Endothelial cell of umbilical vein (primary cell): ENCODE measurements at regions of chr1 and their contacts with region 1.

Region 1: DNA sequence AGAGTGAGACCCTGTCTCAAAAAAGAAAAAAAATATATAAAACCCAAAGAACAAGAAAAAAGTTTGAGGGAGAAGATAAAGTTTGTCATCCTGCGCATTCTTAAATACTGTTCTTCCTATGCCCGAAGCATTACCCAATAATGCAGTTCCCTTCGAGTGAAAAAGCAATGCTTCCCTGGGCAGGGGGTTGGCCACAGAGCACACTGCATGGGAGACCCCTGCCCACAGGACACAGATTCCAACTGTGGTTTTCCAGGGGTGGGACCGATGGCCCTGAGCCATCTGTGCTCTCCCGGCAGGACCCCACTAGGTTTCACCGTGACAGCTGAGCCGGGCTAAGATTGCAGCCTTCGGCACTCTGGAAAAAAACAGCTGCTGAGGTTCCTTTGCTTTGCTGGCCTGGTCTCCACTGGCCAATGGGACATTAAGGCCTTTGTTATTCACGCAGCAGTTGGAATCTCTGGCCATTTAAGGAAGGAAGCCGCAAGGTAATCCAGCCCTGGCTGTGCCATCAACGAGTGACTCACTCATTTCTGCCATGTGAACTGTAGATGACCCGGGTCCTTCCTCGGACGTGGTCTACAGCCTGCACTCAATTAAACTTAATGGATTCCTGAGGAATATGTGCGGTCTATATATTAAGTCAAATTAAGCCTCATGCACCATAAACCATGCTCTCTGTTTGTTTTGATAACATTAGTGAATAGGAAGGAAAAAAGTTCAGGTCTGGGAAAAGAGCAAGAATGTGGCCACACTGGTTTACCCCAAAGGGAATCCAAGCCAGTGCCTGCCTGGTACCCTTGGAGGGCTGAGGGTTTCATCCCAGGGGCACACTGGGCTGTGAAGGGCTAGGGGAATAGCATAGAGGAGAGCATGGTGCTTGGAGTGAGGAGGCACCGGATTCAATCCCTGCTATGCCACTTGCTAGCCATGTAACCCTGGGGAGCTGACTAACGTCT is 163.2 kb downstream of the ZBTB18 start:
- DNase-seq: peak; percentile 98
- H3K4me3 ChIP-seq: no peak overlapping the region
- H3K27ac ChIP-seq: peak overlapping the region; percentile 84
- H3K4me1 ChIP-seq: peaks cover 16% of the 10 kb centered on the region
- H3K27me3 ChIP-seq: no peaks in the 10 kb centered on the region
- CTCF ChIP-seq: no peak
- POLR2A ChIP-seq: peak; percentile 27

Region 2: DNA sequence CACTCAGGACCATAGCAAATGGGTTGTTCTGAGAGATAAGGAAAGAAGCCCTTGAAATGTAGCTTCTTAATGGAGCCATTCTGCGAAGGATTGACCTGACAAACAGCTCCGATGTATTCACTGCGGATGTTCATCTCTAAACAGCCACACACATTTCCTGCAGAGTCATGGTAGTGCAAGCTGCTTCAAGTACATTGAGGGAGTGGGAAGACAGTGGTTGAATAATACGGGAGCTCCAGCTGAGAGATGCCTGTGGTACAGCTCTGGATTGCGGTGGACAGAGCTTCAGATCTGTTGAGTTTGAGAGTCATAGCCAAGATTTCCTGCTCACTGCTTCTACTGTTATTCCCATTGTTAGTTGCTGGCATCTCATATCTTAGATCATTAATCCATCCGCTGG is 76.6 kb before region 1 on chr1:
- CTCF ChIA-PET with region 1: no interaction called
- POLR2A ChIA-PET with region 1: no interaction called
- dilution Hi-C with region 1: no loop called
- intact Hi-C with region 1: loop called (anchors 1 kb)
- DNase-seq: no peak
- H3K4me3 ChIP-seq: no peak overlapping the region
- H3K27ac ChIP-seq: peak overlapping the region; percentile 75
- H3K4me1 ChIP-seq: peaks cover 26% of the 10 kb centered on the region
- H3K27me3 ChIP-seq: no peaks in the 10 kb centered on the region
- CTCF ChIP-seq: no peak
- POLR2A ChIP-seq: no peak

Region 3: DNA sequence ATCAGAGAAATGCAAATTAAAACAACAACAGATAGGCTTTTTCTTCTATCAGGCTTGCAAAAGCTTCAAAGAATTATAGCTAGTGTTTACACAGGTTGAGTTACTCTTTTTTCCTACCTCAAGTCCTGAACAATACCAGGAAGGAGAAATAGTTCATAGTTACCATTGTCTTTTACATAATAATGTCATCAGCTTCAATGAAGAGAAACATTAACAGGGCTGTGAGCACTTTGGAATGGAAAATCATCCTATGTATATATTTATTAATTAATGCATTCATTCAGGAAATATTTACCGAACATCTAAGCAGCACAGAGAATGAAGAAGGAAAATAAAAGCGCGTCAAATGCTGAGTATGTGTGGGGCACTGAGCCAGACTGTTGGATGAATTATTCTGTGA is 34.1 kb after region 1 on chr1:
- CTCF ChIA-PET with region 1: no interaction called
- POLR2A ChIA-PET with region 1: no interaction called
- dilution Hi-C with region 1: no loop called
- intact Hi-C with region 1: loop called (anchors 1 kb)
- DNase-seq: peak; percentile 87
- H3K4me3 ChIP-seq: no peak overlapping the region
- H3K27ac ChIP-seq: peak overlapping the region; percentile 34
- H3K4me1 ChIP-seq: peaks cover 12% of the 10 kb centered on the region
- H3K27me3 ChIP-seq: no peaks in the 10 kb centered on the region
- CTCF ChIP-seq: no peak
- POLR2A ChIP-seq: no peak